Lower lobe of right lung (tissue), 2 donors: ENCODE measurements at regions of chr9 and their contacts with region 1.

Region 1: DNA sequence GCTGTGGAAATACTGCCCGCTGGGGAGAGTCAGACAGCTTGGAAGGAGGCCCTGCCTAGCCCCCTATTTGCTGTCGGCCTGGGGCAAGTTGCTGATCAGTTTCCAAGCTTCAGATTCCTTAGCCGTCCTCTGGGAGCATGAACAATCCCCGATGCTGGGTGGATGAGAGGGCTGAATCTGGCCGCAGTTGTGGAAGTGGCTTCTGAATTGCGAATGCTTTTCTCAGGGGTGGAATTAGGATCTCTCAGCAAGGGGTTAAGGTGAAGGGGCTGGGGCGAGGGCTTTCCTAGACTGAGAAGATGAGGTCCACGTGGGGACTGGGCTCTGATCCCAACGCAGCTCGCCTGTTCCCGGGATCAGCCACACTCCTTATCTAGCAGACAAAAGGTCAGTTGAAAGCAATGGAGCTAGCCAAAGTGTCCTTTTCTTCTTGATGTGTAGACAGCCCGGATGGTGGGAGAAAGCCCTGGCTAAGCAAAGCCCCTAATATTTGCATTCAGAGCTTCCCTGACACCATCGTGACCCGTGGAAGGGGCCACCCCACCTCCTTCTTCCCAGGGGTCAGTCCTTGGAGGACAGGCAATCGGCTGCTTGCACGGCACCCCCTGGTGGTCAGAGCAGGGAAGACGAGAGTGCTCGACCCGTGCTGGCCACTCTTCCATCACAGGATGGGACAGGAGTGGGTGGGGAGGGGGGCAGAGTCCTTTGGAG is 54.9 kb downstream of the COL15A1 start:
- DNase-seq: peak; percentile 84
- ATAC-seq: peak; percentile 85 to 86
- H3K4me3 ChIP-seq: no peak overlapping the region
- H3K27ac ChIP-seq: peak overlapping the region; percentile 42
- H3K4me1 ChIP-seq: peaks cover 37% of the 10 kb centered on the region
- H3K27me3 ChIP-seq: no peaks in the 10 kb centered on the region
- CTCF ChIP-seq: peak; percentile 89

Region 2: GRCh38 chr9:98860871-98861293 is 137.7 kb before region 1 on chr9:
- intact Hi-C with region 1: loop called (anchors 10 kb)
- DNase-seq: no peak
- ATAC-seq: peak; percentile 45 to 56
- H3K4me3 ChIP-seq: no peak overlapping the region
- H3K27ac ChIP-seq: no peak overlapping the region
- H3K4me1 ChIP-seq: peaks cover 4% of the 10 kb centered on the region
- H3K27me3 ChIP-seq: no peaks in the 10 kb centered on the region
- CTCF ChIP-seq: peak; percentile 52